ENCODE measurements at regions of chr10 and their contacts with region 1.

Region 1: DNA sequence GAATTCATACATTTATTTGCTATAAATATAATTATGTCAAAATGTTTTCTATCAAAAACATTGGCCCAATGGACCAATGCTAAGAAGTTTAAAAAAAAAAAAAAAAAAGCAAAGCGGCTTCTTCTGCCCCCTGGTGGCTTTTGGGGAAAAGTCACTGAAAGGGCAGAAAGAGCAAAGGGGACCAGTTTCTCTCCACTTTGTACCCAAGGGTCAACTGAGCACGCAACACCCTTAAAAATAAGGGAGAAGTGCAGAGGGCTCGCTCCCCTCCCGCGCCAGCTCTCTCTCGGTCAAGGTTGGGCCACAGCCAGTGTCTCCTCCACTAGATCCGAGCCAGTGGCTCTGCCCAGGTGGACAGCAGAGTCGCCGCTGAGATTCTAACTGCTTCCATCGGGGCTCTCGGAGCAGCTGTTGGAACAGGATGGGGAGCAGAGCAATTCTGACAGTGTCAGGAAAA is 136.4 kb upstream of the FGFR2 start:
- DNase-seq: peak; percentile 10
- H3K4me3 ChIP-seq: no peak overlapping the region
- H3K27ac ChIP-seq: no peak overlapping the region
- H3K4me1 ChIP-seq: no peaks in the 10 kb centered on the region
- H3K27me3 ChIP-seq: no peaks in the 10 kb centered on the region
- CTCF ChIP-seq: peak; percentile 58 to 75

Region 2: DNA sequence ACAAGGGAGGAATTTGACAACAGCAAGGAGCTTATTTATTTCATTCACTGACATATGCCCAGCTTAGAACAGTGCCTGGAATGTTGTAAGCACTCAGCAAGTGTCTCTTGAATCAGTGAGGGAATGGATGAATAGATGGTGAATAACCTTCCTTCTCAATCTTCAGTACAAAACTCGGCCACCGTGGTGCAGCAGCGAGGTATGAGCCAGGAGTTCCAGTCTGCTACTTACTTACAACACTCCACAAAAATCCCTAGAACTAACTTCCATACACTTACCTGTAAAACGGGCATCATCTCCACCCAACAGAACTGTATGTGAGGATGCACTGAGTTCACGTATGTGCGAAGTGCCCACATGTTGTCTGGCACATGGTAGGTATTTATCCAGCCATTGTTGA is 646.1 kb before region 1 on chr10:
- CTCF ChIA-PET with region 1: no interaction called
- dilution Hi-C with region 1: no loop called
- in situ Hi-C with region 1: no loop called
- intact Hi-C with region 1: loop called (anchors 5 kb)
- DNase-seq: peak; percentile 68
- H3K4me3 ChIP-seq: no peak overlapping the region
- H3K27ac ChIP-seq: no peak overlapping the region
- H3K4me1 ChIP-seq: peaks cover 12% of the 10 kb centered on the region
- H3K27me3 ChIP-seq: no peaks in the 10 kb centered on the region
- CTCF ChIP-seq: peak; percentile 67 to 75

Region 3: GRCh38 chr10:121168545-121169216 is 565.9 kb before region 1 on chr10:
- CTCF ChIA-PET with region 1: no interaction called
- dilution Hi-C with region 1: no loop called
- in situ Hi-C with region 1: no loop called
- intact Hi-C with region 1: loop called (anchors 5 kb)
- DNase-seq: no peak
- H3K4me3 ChIP-seq: no peak overlapping the region
- H3K27ac ChIP-seq: no peak overlapping the region
- H3K4me1 ChIP-seq: no peaks in the 10 kb centered on the region
- H3K27me3 ChIP-seq: no peaks in the 10 kb centered on the region
- CTCF ChIP-seq: peak in 1 of 2 donors; percentile 13

Region 4: DNA sequence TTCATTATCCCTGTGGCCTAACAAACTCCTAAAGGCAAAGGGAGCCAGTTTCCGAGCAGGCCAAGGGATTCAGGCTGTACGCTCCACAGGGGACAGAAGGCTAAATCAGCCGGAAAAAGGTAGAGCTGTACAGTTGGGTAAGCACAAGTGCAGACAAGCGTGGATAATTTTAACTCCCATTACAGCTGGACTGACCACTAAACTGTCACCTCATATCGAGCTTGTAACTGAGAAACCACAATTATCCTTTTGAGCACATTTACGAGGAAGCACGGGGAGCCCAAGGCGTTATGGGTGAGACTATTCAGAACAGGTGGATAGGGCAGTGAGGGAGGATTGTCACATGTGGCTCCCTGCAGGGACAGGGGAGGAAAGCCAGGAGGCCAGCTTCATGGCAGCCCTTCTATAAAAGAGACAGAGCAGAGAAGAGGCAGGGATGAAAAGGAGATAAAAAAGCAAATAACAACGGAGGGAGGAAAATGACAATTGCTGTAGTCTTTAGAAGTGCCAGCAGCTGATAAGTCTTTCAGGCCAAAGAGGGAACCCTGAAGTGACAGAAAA is 424.4 kb before region 1 on chr10:
- CTCF ChIA-PET with region 1: no interaction called
- dilution Hi-C with region 1: no loop called
- in situ Hi-C with region 1: no loop called
- intact Hi-C with region 1: loop called (anchors 10 kb)
- DNase-seq: peak; percentile 65
- H3K4me3 ChIP-seq: no peak overlapping the region
- H3K27ac ChIP-seq: peak overlapping the region; percentile 81
- H3K4me1 ChIP-seq: peaks cover 64% of the 10 kb centered on the region
- H3K27me3 ChIP-seq: no peaks in the 10 kb centered on the region
- CTCF ChIP-seq: no peak

Region 5: GRCh38 chr10:121392657-121393056 is 342.0 kb before region 1 on chr10:
- CTCF ChIA-PET with region 1: no interaction called
- dilution Hi-C with region 1: no loop called
- in situ Hi-C with region 1: no loop called
- intact Hi-C with region 1: loop called (anchors 2 kb)
- DNase-seq: no peak
- H3K4me3 ChIP-seq: peak overlapping the region in 2 of 3 experiments; percentile 13 to 26
- H3K27ac ChIP-seq: no peak overlapping the region
- H3K4me1 ChIP-seq: no peaks in the 10 kb centered on the region
- H3K27me3 ChIP-seq: no peaks in the 10 kb centered on the region
- CTCF ChIP-seq: peak; percentile 8 to 24

Region 6: GRCh38 chr10:121644501-121644900 is 90.1 kb before region 1 on chr10:
- CTCF ChIA-PET with region 1: no interaction called
- dilution Hi-C with region 1: no loop called
- in situ Hi-C with region 1: no loop called
- intact Hi-C with region 1: no loop called
- DNase-seq: no peak
- H3K4me3 ChIP-seq: no peak overlapping the region
- H3K27ac ChIP-seq: no peak overlapping the region
- H3K4me1 ChIP-seq: no peaks in the 10 kb centered on the region
- H3K27me3 ChIP-seq: peaks cover 2% of the 10 kb centered on the region
- CTCF ChIP-seq: no peak

Region 7: GRCh38 chr10:121662945-121663917 is 71.4 kb before region 1 on chr10:
- CTCF ChIA-PET with region 1: no interaction called
- dilution Hi-C with region 1: no loop called
- in situ Hi-C with region 1: no loop called
- intact Hi-C with region 1: no loop called
- DNase-seq: peak; percentile 14
- H3K4me3 ChIP-seq: no peak overlapping the region
- H3K27ac ChIP-seq: no peak overlapping the region
- H3K4me1 ChIP-seq: no peaks in the 10 kb centered on the region
- H3K27me3 ChIP-seq: no peaks in the 10 kb centered on the region
- CTCF ChIP-seq: peak; percentile 48

Measured in mammary epithelial cell (primary cell).